ENCODE measurements at regions of chr2 and their contacts with region 1.

Region 1: DNA sequence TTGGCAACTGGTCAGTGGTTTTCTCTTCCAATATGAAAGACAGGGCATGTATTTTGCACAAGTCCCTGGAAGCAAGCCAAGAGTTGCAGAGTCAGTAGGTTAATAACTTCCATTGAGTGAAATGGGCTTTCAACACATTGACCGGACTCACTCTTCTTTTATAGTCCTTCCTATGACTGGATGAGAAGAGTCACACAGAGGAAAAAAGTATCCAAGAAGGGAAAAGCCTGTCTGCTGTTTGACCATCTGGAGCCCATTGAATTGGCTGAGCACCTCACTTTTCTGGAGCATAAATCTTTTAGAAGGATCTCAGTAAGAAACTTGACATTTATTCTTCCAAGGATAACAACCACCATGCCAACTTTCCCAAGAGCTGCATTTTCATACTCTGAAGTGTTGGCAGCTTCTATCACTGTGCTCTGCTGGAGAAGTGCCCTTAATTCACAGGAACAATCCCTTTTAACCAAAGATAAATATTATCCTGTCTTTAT is 45.4 kb downstream of the RASGRP3 start:
- DNase-seq: no peak
- H3K4me3 ChIP-seq: no peak overlapping the region
- H3K27ac ChIP-seq: no peak overlapping the region
- H3K4me1 ChIP-seq: peaks cover 2% of the 10 kb centered on the region
- H3K27me3 ChIP-seq: no peaks in the 10 kb centered on the region
- CTCF ChIP-seq: no peak
- EP300 ChIP-seq: no peak
- POLR2A ChIP-seq: no peak

Region 2: GRCh38 chr2:33505966-33506365 is 15.9 kb before region 1 on chr2:
- intact Hi-C with region 1: loop called in 1 of 4 experiments (anchors 2 kb)
- DNase-seq: no peak
- H3K4me3 ChIP-seq: no peak overlapping the region
- H3K27ac ChIP-seq: no peak overlapping the region
- H3K4me1 ChIP-seq: no peaks in the 10 kb centered on the region
- H3K27me3 ChIP-seq: no peaks in the 10 kb centered on the region
- CTCF ChIP-seq: no peak
- EP300 ChIP-seq: no peak
- POLR2A ChIP-seq: no peak

Region 3: GRCh38 chr2:33681369-33681757 is 159.5 kb after region 1 on chr2:
- intact Hi-C with region 1: no loop called
- DNase-seq: no peak
- H3K4me3 ChIP-seq: no peak overlapping the region
- H3K27ac ChIP-seq: no peak overlapping the region
- H3K4me1 ChIP-seq: no peaks in the 10 kb centered on the region
- H3K27me3 ChIP-seq: no peaks in the 10 kb centered on the region
- CTCF ChIP-seq: no peak
- EP300 ChIP-seq: no peak
- POLR2A ChIP-seq: no peak

Measured in ovary (tissue), 10 donors.